Naive thymus-derived CD4-positive, alpha-beta T cell (primary cell): ENCODE measurements at regions of chr9 and their contacts with region 1.

Region 1: GRCh38 chr9:9942764-9943424 is 669.9 kb downstream of the PTPRD start:
- DNase-seq: peak in 8 of 9 donors; percentile 6 to 40 (median 25)
- ATAC-seq: peak; percentile 73
- H3K4me3 ChIP-seq: no peak overlapping the region
- H3K4me3 Mint-ChIP-seq: no peak overlapping the region
- H3K27ac ChIP-seq: no peak overlapping the region
- H3K27ac Mint-ChIP-seq: no peak overlapping the region
- H3K4me1 ChIP-seq: no peaks in the 10 kb centered on the region
- H3K4me1 Mint-ChIP-seq: no peaks in the 10 kb centered on the region
- H3K27me3 ChIP-seq: no peaks in the 10 kb centered on the region
- H3K27me3 Mint-ChIP-seq: no peaks in the 10 kb centered on the region

Region 2: GRCh38 chr9:9603345-9603744 is 339.5 kb before region 1 on chr9:
- CTCF ChIA-PET with region 1: no interaction called
- POLR2A ChIA-PET with region 1: no interaction called
- intact Hi-C with region 1: loop called in 1 of 2 experiments (anchors 10 kb)
- DNase-seq: no peak
- ATAC-seq: no peak
- H3K4me3 ChIP-seq: no peak overlapping the region
- H3K4me3 Mint-ChIP-seq: no peak overlapping the region
- H3K27ac ChIP-seq: no peak overlapping the region
- H3K27ac Mint-ChIP-seq: no peak overlapping the region
- H3K4me1 ChIP-seq: no peaks in the 10 kb centered on the region
- H3K4me1 Mint-ChIP-seq: no peaks in the 10 kb centered on the region
- H3K27me3 ChIP-seq: no peaks in the 10 kb centered on the region
- H3K27me3 Mint-ChIP-seq: no peaks in the 10 kb centered on the region

Region 3: GRCh38 chr9:9881699-9882098 is 61.2 kb before region 1 on chr9:
- CTCF ChIA-PET with region 1: no interaction called
- POLR2A ChIA-PET with region 1: no interaction called
- intact Hi-C with region 1: no loop called
- DNase-seq: no peak
- ATAC-seq: no peak
- H3K4me3 ChIP-seq: no peak overlapping the region
- H3K4me3 Mint-ChIP-seq: no peak overlapping the region
- H3K27ac ChIP-seq: no peak overlapping the region
- H3K27ac Mint-ChIP-seq: no peak overlapping the region
- H3K4me1 ChIP-seq: no peaks in the 10 kb centered on the region
- H3K4me1 Mint-ChIP-seq: no peaks in the 10 kb centered on the region
- H3K27me3 ChIP-seq: no peaks in the 10 kb centered on the region
- H3K27me3 Mint-ChIP-seq: no peaks in the 10 kb centered on the region